Right cardiac atrium (tissue), 5 donors: ENCODE measurements at regions of chr3 and their contacts with region 1.

Region 1: GRCh38 chr3:101676765-101677435 is at the start of gene ZBTB11:
- DNase-seq: peak; percentile 99 to 100 (median 100)
- ATAC-seq: peak; percentile 95 to 96
- H3K4me3 ChIP-seq: peak within 1 kb of the TSS; percentile 68
- H3K27ac ChIP-seq: peak within 1 kb of the TSS; percentile 70
- H3K4me1 ChIP-seq: peaks cover 3% of the 10 kb centered on the region
- H3K27me3 ChIP-seq: no peaks in the 10 kb centered on the region
- total RNA-seq, gene ZBTB11: 10.9 to 11.7 (median 11.4) TPM

Region 2: DNA sequence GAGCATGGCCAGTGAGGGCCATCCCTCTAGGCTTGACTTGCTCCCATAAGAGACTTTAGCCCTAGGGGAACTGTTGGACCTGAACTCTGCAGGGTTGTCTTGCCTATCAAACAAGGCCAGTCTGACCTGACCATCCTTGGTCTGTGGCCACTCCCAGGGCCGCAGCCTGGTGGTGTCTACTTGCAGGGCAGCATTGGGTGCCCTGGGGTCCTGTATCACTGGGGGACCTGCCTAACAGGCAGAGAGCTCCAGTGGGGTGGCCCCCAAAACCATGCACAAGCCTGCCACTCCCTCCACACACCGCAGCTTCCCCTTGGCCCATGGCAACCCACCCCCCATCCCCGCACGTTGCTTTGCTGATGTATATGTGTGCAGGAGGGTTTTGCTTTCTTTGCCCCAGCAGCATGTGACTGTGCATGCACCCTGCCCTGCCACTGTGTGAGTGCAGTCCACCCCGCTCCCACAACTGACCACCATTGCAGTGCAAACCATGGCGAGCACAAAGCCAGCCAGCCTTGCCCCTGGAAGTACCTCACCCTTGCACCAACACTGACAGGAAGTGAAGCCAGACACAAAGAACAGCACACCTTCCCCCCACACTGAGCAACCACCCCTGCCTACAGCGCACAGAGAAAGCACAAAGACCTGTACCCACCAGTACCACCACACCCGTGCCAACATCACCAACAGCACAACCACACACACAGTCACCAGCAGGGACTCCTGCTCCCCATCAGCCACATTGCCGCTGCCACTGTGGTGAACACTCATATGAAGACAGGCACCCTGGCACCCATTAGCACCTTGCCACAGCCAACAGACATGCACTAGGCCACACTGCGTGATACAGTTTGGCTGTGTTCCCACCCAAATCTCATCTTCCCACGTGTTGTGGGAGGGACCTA is 252.7 kb before region 1 on chr3:
- intact Hi-C with region 1: no loop called
- DNase-seq: peak in 1 of 3 donors; percentile 23
- ATAC-seq: peak in 1 of 2 donors; percentile 21
- H3K4me3 ChIP-seq: no peak overlapping the region
- H3K27ac ChIP-seq: no peak overlapping the region
- H3K4me1 ChIP-seq: no peaks in the 10 kb centered on the region
- H3K27me3 ChIP-seq: no peaks in the 10 kb centered on the region

Region 3: DNA sequence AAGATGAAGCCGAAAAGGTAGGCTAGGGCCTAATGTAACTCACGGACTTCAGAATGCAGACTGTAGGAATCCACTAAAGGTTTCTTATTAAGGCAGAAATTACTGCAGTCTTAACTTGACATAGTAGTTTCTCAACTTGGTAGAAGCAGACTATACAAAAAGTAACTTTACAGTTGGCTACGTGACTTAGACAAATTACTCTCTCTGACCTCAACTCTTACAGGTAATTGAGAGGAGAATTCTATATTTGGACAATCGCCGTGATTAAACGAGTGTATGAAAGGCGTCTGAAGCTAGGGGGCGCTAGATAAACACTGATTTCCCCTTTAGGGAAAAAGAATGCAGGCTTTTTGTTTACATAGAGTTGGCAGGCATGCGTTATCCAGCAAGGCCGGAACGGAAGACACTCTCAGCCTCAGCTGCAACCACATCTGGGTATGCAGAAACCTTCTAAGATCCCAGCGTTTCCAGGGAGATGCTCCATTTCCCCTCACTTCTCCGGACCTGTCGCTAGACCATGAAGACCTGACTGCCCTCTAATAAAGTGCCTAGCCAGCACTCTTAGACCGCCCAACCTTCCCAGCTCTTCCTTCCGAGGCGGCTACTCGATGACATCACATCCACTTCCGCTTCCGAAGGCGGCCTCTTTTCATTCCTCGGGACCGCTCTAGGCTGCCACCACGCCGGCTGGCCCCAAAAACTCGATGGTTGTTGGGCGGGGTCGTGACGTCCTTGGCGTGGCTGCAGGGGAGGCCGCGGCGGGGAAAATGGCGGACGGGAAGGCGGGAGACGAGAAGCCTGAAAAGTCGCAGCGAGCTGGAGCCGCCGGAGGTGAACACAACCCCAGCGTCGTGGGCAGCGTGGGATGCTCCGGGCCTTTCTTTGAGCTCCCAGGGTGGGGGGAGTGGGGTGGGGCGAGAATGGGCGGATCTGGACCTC is 103.2 kb before region 1 on chr3 and contains the start of gene PCNP:
- intact Hi-C with region 1: loop called in 2 of 4 experiments (anchors 10 kb)
- DNase-seq: peak; percentile 99
- ATAC-seq: peak; percentile 97 to 98
- H3K4me3 ChIP-seq: peak within 1 kb of the TSS; percentile 89
- H3K27ac ChIP-seq: peak within 1 kb of the TSS; percentile 100
- H3K4me1 ChIP-seq: no peaks in the 10 kb centered on the region
- H3K27me3 ChIP-seq: no peaks in the 10 kb centered on the region
- total RNA-seq, gene PCNP: 126 to 152 (median 148) TPM

Region 4: GRCh38 chr3:101588616-101589015 is 88.3 kb before region 1 on chr3:
- intact Hi-C with region 1: no loop called
- DNase-seq: no peak
- ATAC-seq: no peak
- H3K4me3 ChIP-seq: no peak overlapping the region
- H3K27ac ChIP-seq: no peak overlapping the region
- H3K4me1 ChIP-seq: peaks cover 4% of the 10 kb centered on the region
- H3K27me3 ChIP-seq: no peaks in the 10 kb centered on the region